K562 (cell line): ENCODE measurements at regions of chr4 and their contacts with region 1.

Region 1: GRCh38 chr4:1693129-1693896 is 9.2 kb upstream of the FAM53A start:
- DNase-seq: peak; percentile 62 to 83 (median 70)
- ATAC-seq: peak; percentile 96
- H3K4me3 ChIP-seq: no peak overlapping the region
- H3K27ac ChIP-seq: peak overlapping the region; percentile 5; the same call in 1 of the 3 replicates
- H3K4me1 ChIP-seq: no peaks in the 10 kb centered on the region
- H3K27me3 ChIP-seq: no peaks in the 10 kb centered on the region
- CTCF ChIP-seq: peak; percentile 81 to 97 (median 85)
- EP300 ChIP-seq: no peak
- POLR2A ChIP-seq: 0 out of 2 replicates have a peak, but pooled peaks have one; percentile 13
- RAD21 ChIP-seq: peak; percentile 60 to 70

Region 2: DNA sequence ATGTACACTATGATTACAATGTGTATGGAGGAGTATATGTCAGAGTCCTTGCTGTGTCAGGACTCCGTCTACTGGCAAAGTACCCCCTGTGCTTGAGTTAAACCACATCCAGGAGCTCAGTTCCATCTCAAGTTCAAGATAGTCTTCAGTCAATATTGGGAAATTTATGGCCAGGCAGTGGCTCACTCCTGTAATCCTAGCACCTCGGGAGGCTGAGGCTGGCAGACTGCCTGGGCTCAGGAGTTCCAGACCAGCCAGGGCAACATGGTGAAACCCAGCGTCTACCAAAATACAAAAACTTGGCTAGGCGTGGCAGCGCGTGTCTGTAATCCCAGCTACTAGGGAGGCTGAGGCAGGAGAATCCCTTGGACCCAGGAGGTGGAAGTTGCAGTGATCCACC is 13.0 kb after region 1 on chr4:
- CTCF ChIA-PET with region 1: interaction called, 3 read pairs
- POLR2A ChIA-PET with region 1: interaction called, 49 read pairs
- in situ Hi-C with region 1: no loop called
- intact Hi-C with region 1: no loop called
- DNase-seq: no peak
- ATAC-seq: no peak
- H3K4me3 ChIP-seq: no peak overlapping the region
- H3K27ac ChIP-seq: no peak overlapping the region
- H3K4me1 ChIP-seq: peaks cover 16 to 22% of the 10 kb centered on the region in 2 experiments; a peak in 4 of 5 replicates
- H3K27me3 ChIP-seq: no peaks in the 10 kb centered on the region
- CTCF ChIP-seq: no peak
- EP300 ChIP-seq: no peak
- POLR2A ChIP-seq: no peak
- RAD21 ChIP-seq: no peak

Region 3: DNA sequence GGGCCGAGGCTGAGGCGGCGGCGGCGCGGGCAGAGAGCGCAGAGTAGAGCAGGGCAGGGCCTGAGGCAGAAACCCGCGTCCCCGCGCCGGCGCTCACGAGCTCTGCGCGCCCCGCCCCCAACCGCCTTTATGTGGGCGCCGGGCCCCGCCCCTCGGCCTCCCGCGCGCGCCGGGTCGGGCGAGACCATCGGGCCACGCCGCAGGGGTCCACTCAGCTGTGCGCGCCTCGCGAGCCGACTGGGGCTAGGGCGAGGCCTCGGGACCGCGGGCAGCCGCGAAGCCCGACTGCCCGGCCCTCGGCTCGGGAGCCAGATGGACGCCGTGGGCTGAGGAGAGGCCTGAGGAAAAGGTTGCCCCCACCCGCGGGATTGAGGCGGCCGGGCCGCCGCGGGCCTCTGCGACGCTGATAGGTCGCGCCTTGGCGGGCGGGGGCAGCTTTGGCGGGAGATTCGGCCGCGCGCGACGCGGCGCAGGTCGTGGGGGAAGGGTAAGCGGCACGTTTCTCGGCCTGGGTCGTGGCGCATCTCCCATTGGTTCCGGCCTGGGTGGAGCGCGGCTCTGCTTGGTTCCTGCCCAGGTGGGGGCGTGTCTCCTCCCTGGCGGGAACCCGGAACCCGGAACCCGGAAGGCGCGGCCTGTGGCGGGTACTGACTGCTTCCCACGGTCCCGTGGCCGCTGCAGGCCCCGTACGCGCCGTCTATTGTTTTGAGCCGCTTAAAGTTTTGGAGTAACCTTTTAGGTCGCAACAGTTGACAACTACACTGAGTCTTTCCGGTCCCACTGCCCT is 19.1 kb after region 1 on chr4 and contains the start of gene SLBP:
- CTCF ChIA-PET with region 1: interaction called, 3 read pairs
- POLR2A ChIA-PET with region 1: interaction called, 49 read pairs
- in situ Hi-C with region 1: no loop called
- intact Hi-C with region 1: no loop called
- DNase-seq: peak; percentile 90 to 99 (median 95)
- ATAC-seq: peak; percentile 90
- H3K4me3 ChIP-seq: peak within 1 kb of the TSS; percentile 86
- H3K27ac ChIP-seq: peak within 1 kb of the TSS; percentile 100
- H3K4me1 ChIP-seq: peaks cover 28 to 58% of the 10 kb centered on the region in 2 experiments; a peak in 4 of 5 replicates
- H3K27me3 ChIP-seq: no peaks in the 10 kb centered on the region
- CTCF ChIP-seq: no peak
- EP300 ChIP-seq: peak; percentile 65
- POLR2A ChIP-seq: peak; percentile 87
- RAD21 ChIP-seq: no peak
- polyA plus RNA-seq, gene SLBP: 49.4 to 81.8 TPM

Region 4: DNA sequence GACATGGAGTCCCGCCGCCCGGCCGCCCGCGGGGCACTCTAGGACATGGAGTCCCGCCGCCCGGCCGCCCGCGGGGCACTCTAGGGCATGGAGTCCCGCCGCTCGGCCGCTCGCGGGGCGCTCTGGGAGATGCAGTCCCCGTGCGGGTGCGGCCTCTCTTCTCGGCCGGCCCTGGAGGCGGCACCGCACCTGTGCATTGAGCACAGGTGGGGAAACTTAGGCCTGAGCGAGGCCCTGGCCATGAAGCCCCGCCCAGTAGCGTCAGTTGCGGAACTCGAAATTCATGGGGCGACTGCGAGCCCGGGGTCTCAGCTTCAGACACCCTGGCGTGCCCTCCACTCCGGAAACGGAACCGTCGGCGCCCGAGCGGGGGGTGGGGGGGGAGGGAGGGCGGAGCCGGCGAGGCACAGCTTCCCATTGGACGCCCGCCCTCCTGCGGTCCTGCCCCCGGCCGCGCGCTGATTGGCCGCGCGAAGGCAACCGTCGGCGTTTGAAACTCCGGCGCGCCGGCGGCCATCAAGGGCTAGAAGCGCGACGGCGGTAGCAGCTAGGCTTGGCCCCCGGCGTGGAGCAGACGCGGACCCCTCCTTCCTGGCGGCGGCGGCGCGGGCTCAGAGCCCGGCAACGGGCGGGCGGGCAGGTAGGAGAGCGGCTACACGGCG is 27.8 kb after region 1 on chr4 and contains the starts of genes TACC3 and TMEM129:
- CTCF ChIA-PET with region 1: interaction called, 20 read pairs
- POLR2A ChIA-PET with region 1: interaction called, 10 read pairs
- in situ Hi-C with region 1: no loop called
- intact Hi-C with region 1: loop called (anchors 1 kb)
- DNase-seq: peak; percentile 96 to 99 (median 96)
- ATAC-seq: peak; percentile 87
- H3K4me3 ChIP-seq: peak within 1 kb of the TSS; percentile 98
- H3K27ac ChIP-seq: peak within 1 kb of the TSS; percentile 97
- H3K4me1 ChIP-seq: peaks cover 10 to 69% of the 10 kb centered on the region in 2 experiments; a peak in 4 of 5 replicates
- H3K27me3 ChIP-seq: no peaks in the 10 kb centered on the region
- CTCF ChIP-seq: no peak
- EP300 ChIP-seq: no peak
- POLR2A ChIP-seq: peak; percentile 64
- RAD21 ChIP-seq: no peak
- polyA plus RNA-seq, gene TACC3: 1.9 to 2.8 TPM
- polyA plus RNA-seq, gene TMEM129: 0.34 to 0.53 TPM

Region 5: GRCh38 chr4:1726146-1726934 is 33.0 kb after region 1 on chr4:
- CTCF ChIA-PET with region 1: interaction called, 20 read pairs
- POLR2A ChIA-PET with region 1: interaction called, 10 read pairs
- in situ Hi-C with region 1: no loop called
- intact Hi-C with region 1: loop called (anchors 1 kb)
- DNase-seq: peak; percentile 54 to 91 (median 66)
- ATAC-seq: peak; percentile 72
- H3K4me3 ChIP-seq: no peak overlapping the region
- H3K27ac ChIP-seq: no peak overlapping the region
- H3K4me1 ChIP-seq: peaks cover 10 to 48% of the 10 kb centered on the region in 2 experiments; a peak in 4 of 5 replicates
- H3K27me3 ChIP-seq: no peaks in the 10 kb centered on the region
- CTCF ChIP-seq: peak; percentile 80 to 99 (median 92)
- EP300 ChIP-seq: no peak
- POLR2A ChIP-seq: no peak
- RAD21 ChIP-seq: peak; percentile 57 to 68